Activated B cell treated with CpG ODN at 0.5 μM for 24 hours (primary cell): ENCODE measurements at regions of chr18 and their contacts with region 1.

Region 1: GRCh38 chr18:55415258-55415871 is 172.6 kb downstream of the TCF4 start:
- DNase-seq: peak; percentile 74
- ATAC-seq: peak; percentile 92
- H3K4me3 Mint-ChIP-seq: no peak overlapping the region
- H3K27ac Mint-ChIP-seq: peak overlapping the region; percentile 53
- H3K4me1 Mint-ChIP-seq: peaks cover 36% of the 10 kb centered on the region
- H3K27me3 Mint-ChIP-seq: no peaks in the 10 kb centered on the region
- CTCF ChIP-seq: peak; percentile 96

Region 2: DNA sequence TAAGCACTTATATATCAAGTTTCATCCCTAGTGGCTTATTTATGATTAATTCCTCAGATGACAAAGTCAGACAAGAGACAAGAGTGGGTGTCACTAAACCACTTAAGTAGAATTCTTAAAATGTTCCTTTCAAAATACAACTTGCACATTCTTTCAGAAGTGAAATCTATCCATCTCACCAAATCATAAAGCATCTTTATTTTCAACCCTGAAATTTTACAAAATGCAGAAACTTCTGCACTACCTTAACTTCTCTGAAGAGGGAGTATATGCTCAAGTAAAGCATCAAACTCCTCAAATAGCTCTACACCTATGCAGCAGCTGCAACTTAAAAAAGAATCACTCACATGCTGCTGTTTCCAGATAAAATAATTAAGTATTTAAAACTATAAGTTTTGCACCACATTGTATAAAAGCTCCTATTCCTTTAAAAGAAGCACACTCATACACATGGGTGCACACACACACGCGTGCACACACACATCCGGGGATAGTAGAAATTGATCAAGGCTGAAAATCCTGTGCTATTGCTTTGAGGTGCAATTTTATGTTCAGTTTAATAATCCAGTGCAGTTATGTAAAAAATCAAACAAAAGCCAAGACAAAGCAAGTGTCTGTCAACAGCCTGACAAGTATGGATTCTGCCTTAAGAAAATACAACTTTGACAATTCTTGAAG is 71.8 kb before region 1 on chr18:
- CTCF ChIA-PET with region 1: interaction called, 5 read pairs
- POLR2A ChIA-PET with region 1: no interaction called
- intact Hi-C with region 1: loop called (anchors 1 kb)
- DNase-seq: no peak
- ATAC-seq: peak; percentile 82
- H3K4me3 Mint-ChIP-seq: no peak overlapping the region
- H3K27ac Mint-ChIP-seq: no peak overlapping the region
- H3K4me1 Mint-ChIP-seq: peaks cover 18% of the 10 kb centered on the region
- H3K27me3 Mint-ChIP-seq: no peaks in the 10 kb centered on the region
- CTCF ChIP-seq: peak; percentile 34

Region 3: DNA sequence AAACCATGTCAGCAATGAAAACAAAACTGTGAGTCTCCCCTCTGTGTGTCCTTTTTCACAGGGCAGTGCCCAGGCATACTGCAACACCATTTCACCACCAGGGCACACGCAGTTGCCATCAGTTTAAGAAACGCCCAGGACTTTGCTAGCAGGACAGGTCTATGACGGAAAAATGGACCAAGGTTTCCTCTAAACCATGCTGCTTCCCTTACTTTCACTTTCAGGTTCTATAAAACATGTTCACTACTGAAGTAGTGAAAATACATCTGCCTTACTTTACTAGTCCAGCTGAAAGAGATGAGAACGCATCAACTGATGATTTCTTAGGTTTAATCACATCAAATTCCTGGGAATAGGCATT is 62.1 kb after region 1 on chr18:
- CTCF ChIA-PET with region 1: no interaction called
- POLR2A ChIA-PET with region 1: interaction called, 11 read pairs
- intact Hi-C with region 1: no loop called
- DNase-seq: peak; percentile 23
- ATAC-seq: peak; percentile 94
- H3K4me3 Mint-ChIP-seq: peak overlapping the region; percentile 97
- H3K27ac Mint-ChIP-seq: peak overlapping the region; percentile 93
- H3K4me1 Mint-ChIP-seq: peaks cover 21% of the 10 kb centered on the region
- H3K27me3 Mint-ChIP-seq: no peaks in the 10 kb centered on the region
- CTCF ChIP-seq: no peak

Region 4: DNA sequence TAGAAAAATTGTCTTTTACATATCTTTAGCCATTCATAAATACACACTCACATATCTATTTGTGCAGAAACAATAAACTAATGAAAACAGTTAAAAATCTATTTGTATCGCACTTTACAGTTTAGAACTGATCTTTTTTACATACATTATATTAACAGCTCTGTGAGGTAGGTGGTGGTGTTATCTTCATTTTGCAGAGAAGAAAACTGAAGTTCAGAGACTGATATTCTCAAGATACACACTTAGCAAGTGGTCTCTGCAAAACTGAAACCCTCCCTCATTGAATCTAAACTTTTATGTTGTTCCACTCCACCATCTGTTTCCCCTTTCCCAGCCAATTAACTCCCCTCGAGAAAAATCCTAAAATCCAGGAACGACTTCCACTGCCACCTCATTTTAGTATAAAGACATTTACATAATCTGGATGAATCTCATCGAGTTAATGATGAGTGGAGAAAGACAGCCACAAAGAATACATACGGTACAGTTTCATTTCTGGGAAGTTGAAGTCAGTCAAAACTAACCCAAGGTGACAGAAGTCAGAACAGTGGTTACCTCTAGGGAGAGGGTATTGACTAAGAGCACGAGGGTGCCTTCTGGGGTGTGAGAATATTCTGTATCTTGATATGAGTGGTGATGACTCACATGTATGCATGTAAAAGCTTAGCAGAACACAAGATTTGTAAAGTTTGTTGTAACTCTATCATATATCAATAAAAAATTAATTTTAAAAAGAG is 696.8 kb after region 1 on chr18:
- CTCF ChIA-PET with region 1: no interaction called
- POLR2A ChIA-PET with region 1: no interaction called
- intact Hi-C with region 1: loop called (anchors 5 kb)
- DNase-seq: no peak
- ATAC-seq: peak; percentile 92
- H3K4me3 Mint-ChIP-seq: peak overlapping the region; percentile 64
- H3K27ac Mint-ChIP-seq: peak overlapping the region; percentile 72
- H3K4me1 Mint-ChIP-seq: peaks cover 50% of the 10 kb centered on the region
- H3K27me3 Mint-ChIP-seq: no peaks in the 10 kb centered on the region
- CTCF ChIP-seq: no peak

Region 5: DNA sequence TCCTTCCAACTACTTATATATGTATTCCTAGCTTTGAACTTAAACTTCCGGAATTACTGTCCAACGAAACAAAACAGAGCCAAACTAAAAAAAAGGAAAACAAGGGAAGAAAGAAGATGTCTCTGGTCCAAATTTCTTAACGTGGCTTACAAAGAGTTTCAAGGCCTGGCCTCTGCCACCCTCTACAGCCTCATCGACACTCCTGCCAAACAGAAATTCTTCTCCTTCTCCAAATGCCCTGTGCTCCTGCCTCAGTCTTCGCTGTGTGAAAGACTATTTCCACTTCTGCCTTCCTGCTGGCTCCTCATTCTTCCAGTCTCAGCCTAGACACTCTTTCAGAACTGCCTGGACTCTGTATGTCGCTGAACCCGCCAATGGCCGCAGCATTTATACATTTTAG is 973.8 kb after region 1 on chr18:
- CTCF ChIA-PET with region 1: no interaction called
- POLR2A ChIA-PET with region 1: no interaction called
- intact Hi-C with region 1: loop called (anchors 1 kb)
- DNase-seq: no peak
- ATAC-seq: no peak
- H3K4me3 Mint-ChIP-seq: no peak overlapping the region
- H3K27ac Mint-ChIP-seq: no peak overlapping the region
- H3K4me1 Mint-ChIP-seq: no peaks in the 10 kb centered on the region
- H3K27me3 Mint-ChIP-seq: no peaks in the 10 kb centered on the region
- CTCF ChIP-seq: no peak